ENCODE measurements at regions of chr2 and their contacts with region 1.

Region 1: DNA sequence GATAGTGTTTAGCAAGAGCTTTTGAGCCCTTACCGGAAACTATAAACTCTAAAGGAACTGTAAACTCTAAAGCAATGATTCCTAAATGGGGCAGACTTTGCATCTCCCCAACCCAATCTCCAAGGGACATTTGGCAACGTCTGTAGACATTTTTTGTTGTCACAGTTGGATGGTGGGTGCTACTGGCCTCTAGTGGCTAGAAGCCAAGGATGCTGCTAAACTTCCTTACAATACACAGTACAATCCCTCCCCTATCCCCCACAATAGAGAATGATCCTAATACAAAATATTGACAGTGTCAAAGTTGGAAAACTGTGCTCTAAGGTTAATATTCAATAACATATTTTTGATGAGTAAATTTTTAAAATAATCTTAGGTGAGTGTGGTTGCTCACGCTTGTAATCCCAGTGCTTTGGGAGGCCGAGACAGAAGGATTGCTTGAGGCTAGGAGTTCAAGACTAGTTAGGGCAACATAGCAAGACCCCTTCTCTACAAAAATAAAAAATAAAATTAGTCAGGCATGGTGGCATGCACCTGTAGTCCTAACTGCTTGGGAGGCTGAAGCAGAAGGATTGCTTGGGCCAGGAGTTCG is 66.7 kb downstream of the PTPN4 start:
- DNase-seq: no peak
- ATAC-seq: peak in 1 of 2 donors; percentile 47

Region 2: GRCh38 chr2:119702918-119703401 is 123.5 kb before region 1 on chr2:
- intact Hi-C with region 1: loop called in 1 of 2 experiments (anchors 5 kb)
- DNase-seq: peak; percentile 63
- ATAC-seq: peak; percentile 82 to 88

Region 3: GRCh38 chr2:119753041-119753929 is 73.2 kb before region 1 on chr2:
- intact Hi-C with region 1: loop called (anchors 1 to 5 kb)
- DNase-seq: no peak
- ATAC-seq: peak; percentile 33 to 73

Region 4: DNA sequence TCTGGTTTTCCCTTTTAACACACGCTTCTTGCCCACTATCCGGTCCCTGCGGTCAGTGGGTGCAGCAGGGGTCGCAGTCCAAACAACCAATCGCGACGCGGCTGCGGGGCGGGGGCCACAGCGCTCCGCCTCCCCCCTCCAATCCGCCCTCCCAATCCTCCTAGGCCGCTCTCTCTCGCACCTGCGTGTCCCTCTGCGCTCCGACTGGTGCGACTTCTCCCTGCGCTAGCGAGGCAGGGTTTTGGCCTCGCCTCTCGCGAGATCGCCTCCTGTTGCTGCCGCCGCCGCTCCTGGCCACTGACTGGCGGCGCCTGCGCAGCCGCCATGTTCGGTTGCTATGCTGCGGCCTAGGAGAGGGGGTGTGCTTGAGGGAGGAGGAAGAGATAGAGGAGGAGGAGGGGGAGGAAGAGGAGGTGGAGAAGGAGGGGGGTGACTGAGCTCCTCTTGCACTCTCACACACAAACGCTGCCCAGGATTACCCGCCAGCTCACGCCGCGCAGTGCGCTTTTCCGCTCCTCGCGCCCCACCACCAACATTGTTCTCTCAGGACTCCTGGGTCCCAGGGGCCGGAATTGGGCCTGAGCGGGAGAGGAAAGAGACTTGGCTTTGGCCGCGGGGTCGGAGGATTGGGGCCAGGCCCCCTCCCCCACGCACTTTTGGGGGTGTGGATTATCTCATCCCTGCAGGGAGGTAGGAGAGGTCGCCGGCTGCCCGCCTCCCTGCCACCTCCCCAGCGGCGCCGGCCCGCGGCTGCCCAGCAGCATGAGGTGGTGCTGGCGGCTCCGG is 66.8 kb before region 1 on chr2 and contains the start of gene PTPN4:
- intact Hi-C with region 1: loop called in 1 of 2 experiments (anchors 5 kb)
- DNase-seq: peak; percentile 97
- ATAC-seq: peak; percentile 97 to 98
- total RNA-seq, gene PTPN4: 33.0 TPM